ENCODE measurements at regions of chr3 and their contacts with region 1.

Region 1: GRCh38 chr3:9448643-9449042 is 51.2 kb downstream of the SETD5 start:
- DNase-seq: no peak

Region 2: GRCh38 chr3:9373465-9373864 is 75.2 kb before region 1 on chr3:
- in situ Hi-C with region 1: loop called (anchors 10 kb)
- DNase-seq: no peak

Region 3: GRCh38 chr3:9676785-9677184 is 228.1 kb after region 1 on chr3:
- in situ Hi-C with region 1: no loop called
- DNase-seq: no peak

Measured in ACHN (cell line).